IMR-90 (cell line): ENCODE measurements at regions of chr16 and their contacts with region 1.

Region 1: GRCh38 chr16:12995721-12996372 is 94.4 kb downstream of the SHISA9 start:
- DNase-seq: no peak
- ATAC-seq: no peak
- H3K4me3 ChIP-seq: no peak overlapping the region
- H3K27ac ChIP-seq: no peak overlapping the region
- H3K4me1 ChIP-seq: no peaks in the 10 kb centered on the region
- H3K27me3 ChIP-seq: no peaks in the 10 kb centered on the region
- CTCF ChIP-seq: no peak
- POLR2A ChIP-seq: no peak
- RAD21 ChIP-seq: no peak

Region 2: GRCh38 chr16:13767215-13767614 is 771.4 kb after region 1 on chr16:
- CTCF ChIA-PET with region 1: no interaction called
- POLR2A ChIA-PET with region 1: no interaction called
- dilution Hi-C with region 1: no loop called
- in situ Hi-C with region 1: no loop called
- intact Hi-C with region 1: loop called (anchors 10 kb)
- DNase-seq: no peak
- ATAC-seq: no peak
- H3K4me3 ChIP-seq: no peak overlapping the region
- H3K27ac ChIP-seq: no peak overlapping the region
- H3K4me1 ChIP-seq: no peaks in the 10 kb centered on the region
- H3K27me3 ChIP-seq: no peaks in the 10 kb centered on the region
- CTCF ChIP-seq: no peak
- POLR2A ChIP-seq: no peak
- RAD21 ChIP-seq: no peak